K562 (cell line): ENCODE measurements at regions of chr16 and their contacts with region 1.

Region 1: GRCh38 chr16:85086347-85087291 is 25.7 kb downstream of the CIBAR2 start:
- DNase-seq: peak; percentile 82 to 86 (median 83)
- ATAC-seq: peak; percentile 85
- H3K4me3 ChIP-seq: no peak overlapping the region
- H3K27ac ChIP-seq: no peak overlapping the region
- H3K4me1 ChIP-seq: peaks cover 9 to 56% of the 10 kb centered on the region in 2 experiments; a peak in 3 of 5 replicates
- H3K27me3 ChIP-seq: no peaks in the 10 kb centered on the region
- CTCF ChIP-seq: peak; percentile 90 to 92 (median 91)
- EP300 ChIP-seq: no peak
- POLR2A ChIP-seq: no peak
- RAD21 ChIP-seq: peak; percentile 77 to 91

Region 2: GRCh38 chr16:84629580-84629979 is 457.0 kb before region 1 on chr16:
- CTCF ChIA-PET with region 1: no interaction called
- POLR2A ChIA-PET with region 1: no interaction called
- in situ Hi-C with region 1: no loop called
- intact Hi-C with region 1: loop called (anchors 10 kb)
- DNase-seq: no peak
- ATAC-seq: peak; percentile 44
- H3K4me3 ChIP-seq: no peak overlapping the region
- H3K27ac ChIP-seq: no peak overlapping the region
- H3K4me1 ChIP-seq: peaks cover 0 to 6% of the 10 kb centered on the region in 2 experiments; a peak in 1 of 5 replicates
- H3K27me3 ChIP-seq: peaks cover 8 to 10% of the 10 kb centered on the region in 2 experiments; a peak in 2 of 5 replicates
- CTCF ChIP-seq: no peak
- EP300 ChIP-seq: no peak
- POLR2A ChIP-seq: no peak
- RAD21 ChIP-seq: no peak

Region 3: GRCh38 chr16:84925092-84925772 is 161.4 kb before region 1 on chr16:
- CTCF ChIA-PET with region 1: interaction called, 11 read pairs
- POLR2A ChIA-PET with region 1: no interaction called
- in situ Hi-C with region 1: no loop called
- intact Hi-C with region 1: loop called (anchors 5 kb)
- DNase-seq: peak; percentile 85 to 88 (median 86)
- ATAC-seq: peak; percentile 90
- H3K4me3 ChIP-seq: no peak overlapping the region
- H3K27ac ChIP-seq: no peak overlapping the region
- H3K4me1 ChIP-seq: peaks cover 10 to 54% of the 10 kb centered on the region in 2 experiments
- H3K27me3 ChIP-seq: peaks cover 3 to 10% of the 10 kb centered on the region in 2 experiments; a peak in 2 of 5 replicates
- CTCF ChIP-seq: peak; percentile 95 to 99 (median 97)
- EP300 ChIP-seq: no peak
- POLR2A ChIP-seq: no peak
- RAD21 ChIP-seq: peak; percentile 98 to 99

Region 4: DNA sequence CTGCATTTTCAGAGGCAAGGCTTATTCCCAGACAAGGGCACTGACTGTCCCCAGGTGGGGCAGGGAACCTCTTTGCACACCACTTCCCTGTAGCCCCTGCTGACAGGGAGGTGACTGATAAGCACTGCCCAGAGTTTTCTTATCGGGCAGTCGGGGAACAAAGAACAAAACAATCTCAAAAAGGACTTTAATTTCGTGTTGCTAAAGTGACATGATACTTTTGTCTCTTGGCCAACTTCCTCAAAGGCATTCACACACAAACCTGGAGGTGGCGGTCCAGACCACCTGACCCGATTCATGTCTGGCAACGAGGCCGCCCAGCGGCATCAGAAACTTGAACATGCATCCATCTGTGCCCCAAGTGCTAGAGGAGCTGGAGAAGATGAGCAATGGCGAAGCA is 104.2 kb before region 1 on chr16:
- CTCF ChIA-PET with region 1: interaction called, 10 read pairs
- POLR2A ChIA-PET with region 1: no interaction called
- in situ Hi-C with region 1: no loop called
- intact Hi-C with region 1: loop called (anchors 2 kb)
- DNase-seq: peak; percentile 52 to 70 (median 56)
- ATAC-seq: peak; percentile 75
- H3K4me3 ChIP-seq: no peak overlapping the region
- H3K27ac ChIP-seq: no peak overlapping the region
- H3K4me1 ChIP-seq: peaks cover 17 to 28% of the 10 kb centered on the region in 2 experiments
- H3K27me3 ChIP-seq: no peaks in the 10 kb centered on the region
- CTCF ChIP-seq: peak; percentile 63 to 82 (median 81)
- EP300 ChIP-seq: no peak; the same call in 1 of the 2 replicates
- POLR2A ChIP-seq: no peak
- RAD21 ChIP-seq: peak; percentile 73 to 85

Region 5: GRCh38 chr16:85027349-85027957 is 59.2 kb before region 1 on chr16 and contains the start of gene KIAA0513:
- CTCF ChIA-PET with region 1: no interaction called
- POLR2A ChIA-PET with region 1: no interaction called
- in situ Hi-C with region 1: no loop called
- intact Hi-C with region 1: loop called (anchors 5 kb)
- DNase-seq: peak; percentile 98 to 100 (median 100)
- ATAC-seq: peak; percentile 92
- H3K4me3 ChIP-seq: peak within 1 kb of the TSS; percentile 75
- H3K27ac ChIP-seq: peak within 1 kb of the TSS; percentile 57
- H3K4me1 ChIP-seq: peaks cover 33 to 39% of the 10 kb centered on the region in 2 experiments
- H3K27me3 ChIP-seq: no peaks in the 10 kb centered on the region
- CTCF ChIP-seq: peak in 2 of 3 experiments; percentile 48 to 60; a peak in 5 of 6 replicates
- EP300 ChIP-seq: peak; percentile 45
- POLR2A ChIP-seq: peak; percentile 83
- RAD21 ChIP-seq: peak; percentile 38 to 47; a peak in 3 of 4 replicates
- polyA plus RNA-seq, gene KIAA0513: 0.18 to 0.36 TPM

Region 6: GRCh38 chr16:85055503-85056210 is 31.0 kb before region 1 on chr16:
- CTCF ChIA-PET with region 1: interaction called, 5 read pairs
- POLR2A ChIA-PET with region 1: interaction called, 4 read pairs
- in situ Hi-C with region 1: no loop called
- intact Hi-C with region 1: loop called (anchors 5 kb)
- DNase-seq: peak in 3 of 4 experiments; percentile 39 to 83 (median 58)
- ATAC-seq: peak; percentile 73
- H3K4me3 ChIP-seq: peak overlapping the region; percentile 3; the same call in 1 of the 2 replicates
- H3K27ac ChIP-seq: peak overlapping the region; percentile 67
- H3K4me1 ChIP-seq: peaks cover 37 to 43% of the 10 kb centered on the region in 2 experiments
- H3K27me3 ChIP-seq: no peaks in the 10 kb centered on the region
- CTCF ChIP-seq: no peak
- EP300 ChIP-seq: peak; percentile 68
- POLR2A ChIP-seq: no peak
- RAD21 ChIP-seq: peak; percentile 26 to 38; a peak in 2 of 4 replicates

Region 7: GRCh38 chr16:85148944-85149343 is 62.3 kb after region 1 on chr16:
- CTCF ChIA-PET with region 1: no interaction called
- POLR2A ChIA-PET with region 1: no interaction called
- in situ Hi-C with region 1: no loop called
- intact Hi-C with region 1: no loop called
- DNase-seq: no peak
- ATAC-seq: no peak
- H3K4me3 ChIP-seq: no peak overlapping the region
- H3K27ac ChIP-seq: no peak overlapping the region
- H3K4me1 ChIP-seq: peaks cover 17 to 43% of the 10 kb centered on the region in 2 experiments; a peak in 4 of 5 replicates
- H3K27me3 ChIP-seq: peaks cover 33 to 70% of the 10 kb centered on the region in 2 experiments
- CTCF ChIP-seq: no peak
- EP300 ChIP-seq: no peak
- POLR2A ChIP-seq: no peak
- RAD21 ChIP-seq: no peak